ENCODE measurements at regions of chr14 and their contacts with region 1.

Region 1: GRCh38 chr14:64841121-64841651 is 38.5 kb downstream of the SPTB start:
- DNase-seq: peak; percentile 58 to 69
- ATAC-seq: peak; percentile 97
- H3K4me3 ChIP-seq: no peak overlapping the region
- H3K27ac ChIP-seq: 0 out of 6 replicates have a peak overlapping the region, but pooled peaks of 1 of the 2 experiments have one; percentile 17
- H3K4me1 ChIP-seq: peaks cover 13% of the 10 kb centered on the region; the same call in 1 of the 3 replicates
- CTCF ChIP-seq: peak; percentile 45
- EP300 ChIP-seq: no peak
- POLR2A ChIP-seq: no peak
- RAD21 ChIP-seq: peak in 1 of 2 experiments; percentile 39; a peak in 2 of 5 replicates

Region 2: DNA sequence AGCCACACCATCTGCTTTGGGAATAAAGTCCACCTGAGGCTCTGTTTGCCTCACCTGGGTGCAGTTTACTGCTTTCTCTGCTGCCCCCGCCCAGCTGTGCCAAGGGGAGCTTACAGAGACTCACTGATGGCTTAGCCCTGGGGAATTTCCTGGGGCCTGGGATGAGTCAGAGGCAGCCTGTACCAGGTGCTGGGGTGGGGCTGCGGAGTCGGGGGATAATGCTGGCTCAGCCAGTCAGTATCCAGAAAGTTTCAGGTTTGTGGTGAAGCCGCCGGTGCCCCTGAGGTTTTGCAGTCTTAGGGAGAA is 114.6 kb before region 1 on chr14:
- CTCF ChIA-PET with region 1: no interaction called
- POLR2A ChIA-PET with region 1: no interaction called
- DNase-seq: peak; percentile 52 to 82
- ATAC-seq: peak; percentile 83 to 87
- H3K4me3 ChIP-seq: no peak overlapping the region
- H3K27ac ChIP-seq: peak overlapping the region; percentile 81 to 84
- H3K4me1 ChIP-seq: peaks cover 62% of the 10 kb centered on the region
- CTCF ChIP-seq: no peak
- EP300 ChIP-seq: no peak
- POLR2A ChIP-seq: no peak
- RAD21 ChIP-seq: no peak

Region 3: DNA sequence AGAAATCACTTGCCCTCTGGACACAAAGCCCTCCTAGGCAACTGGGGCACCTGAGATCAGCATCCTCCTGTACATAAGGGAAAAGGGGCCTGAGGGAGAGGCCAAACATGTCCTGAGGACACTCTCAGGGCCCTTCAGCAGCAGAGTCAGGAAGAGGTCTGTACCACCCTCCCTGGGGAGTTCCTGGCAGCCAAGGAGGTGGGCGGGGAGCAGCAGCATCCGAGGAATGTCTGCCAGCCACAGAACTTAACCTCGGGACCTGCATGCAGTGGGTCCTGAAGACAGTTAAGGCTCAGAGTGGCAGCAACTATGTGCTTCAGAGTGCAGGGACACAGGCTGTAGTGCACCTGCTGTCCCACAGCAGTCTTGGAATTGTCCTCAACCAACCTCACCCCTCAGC is 23.6 kb before region 1 on chr14:
- CTCF ChIA-PET with region 1: interaction called, 46 read pairs
- POLR2A ChIA-PET with region 1: no interaction called
- DNase-seq: no peak
- ATAC-seq: peak in 1 of 2 experiments; percentile 31; a peak in 1 of 6 replicates
- H3K4me3 ChIP-seq: no peak overlapping the region
- H3K27ac ChIP-seq: peak overlapping the region in 1 of 2 experiments; percentile 56; a peak in 3 of 6 replicates
- H3K4me1 ChIP-seq: peaks cover 10% of the 10 kb centered on the region
- CTCF ChIP-seq: no peak
- EP300 ChIP-seq: no peak
- POLR2A ChIP-seq: no peak
- RAD21 ChIP-seq: no peak

Region 4: GRCh38 chr14:64880221-64881121 is 39.3 kb after region 1 on chr14:
- CTCF ChIA-PET with region 1: interaction called, 16 read pairs
- POLR2A ChIA-PET with region 1: no interaction called
- DNase-seq: peak; percentile 40 to 73
- ATAC-seq: peak; percentile 79 to 91
- H3K4me3 ChIP-seq: peak overlapping the region; percentile 85
- H3K27ac ChIP-seq: peak overlapping the region; percentile 65 to 82
- H3K4me1 ChIP-seq: no peaks in the 10 kb centered on the region
- CTCF ChIP-seq: no peak
- EP300 ChIP-seq: no peak
- POLR2A ChIP-seq: no peak
- RAD21 ChIP-seq: no peak

Measured in A549 (cell line).